CD8-positive, alpha-beta T cell (primary cell): ENCODE measurements at regions of chr12 and their contacts with region 1.

Region 1: GRCh38 chr12:109110988-109111495 is 5.3 kb upstream of the ACACB start:
- DNase-seq: peak; percentile 11 to 74 (median 55)
- ATAC-seq: peak; percentile 75
- H3K4me3 ChIP-seq: peak overlapping the region; percentile 57 to 71
- H3K4me3 Mint-ChIP-seq: peak overlapping the region; percentile 83
- H3K27ac ChIP-seq: peak overlapping the region; percentile 64 to 73
- H3K27ac Mint-ChIP-seq: peak overlapping the region; percentile 85
- H3K4me1 ChIP-seq: peaks cover 7% of the 10 kb centered on the region
- H3K4me1 Mint-ChIP-seq: peaks cover 36% of the 10 kb centered on the region
- H3K27me3 ChIP-seq: no peaks in the 10 kb centered on the region
- H3K27me3 Mint-ChIP-seq: no peaks in the 10 kb centered on the region
- CTCF ChIP-seq: no peak

Region 2: DNA sequence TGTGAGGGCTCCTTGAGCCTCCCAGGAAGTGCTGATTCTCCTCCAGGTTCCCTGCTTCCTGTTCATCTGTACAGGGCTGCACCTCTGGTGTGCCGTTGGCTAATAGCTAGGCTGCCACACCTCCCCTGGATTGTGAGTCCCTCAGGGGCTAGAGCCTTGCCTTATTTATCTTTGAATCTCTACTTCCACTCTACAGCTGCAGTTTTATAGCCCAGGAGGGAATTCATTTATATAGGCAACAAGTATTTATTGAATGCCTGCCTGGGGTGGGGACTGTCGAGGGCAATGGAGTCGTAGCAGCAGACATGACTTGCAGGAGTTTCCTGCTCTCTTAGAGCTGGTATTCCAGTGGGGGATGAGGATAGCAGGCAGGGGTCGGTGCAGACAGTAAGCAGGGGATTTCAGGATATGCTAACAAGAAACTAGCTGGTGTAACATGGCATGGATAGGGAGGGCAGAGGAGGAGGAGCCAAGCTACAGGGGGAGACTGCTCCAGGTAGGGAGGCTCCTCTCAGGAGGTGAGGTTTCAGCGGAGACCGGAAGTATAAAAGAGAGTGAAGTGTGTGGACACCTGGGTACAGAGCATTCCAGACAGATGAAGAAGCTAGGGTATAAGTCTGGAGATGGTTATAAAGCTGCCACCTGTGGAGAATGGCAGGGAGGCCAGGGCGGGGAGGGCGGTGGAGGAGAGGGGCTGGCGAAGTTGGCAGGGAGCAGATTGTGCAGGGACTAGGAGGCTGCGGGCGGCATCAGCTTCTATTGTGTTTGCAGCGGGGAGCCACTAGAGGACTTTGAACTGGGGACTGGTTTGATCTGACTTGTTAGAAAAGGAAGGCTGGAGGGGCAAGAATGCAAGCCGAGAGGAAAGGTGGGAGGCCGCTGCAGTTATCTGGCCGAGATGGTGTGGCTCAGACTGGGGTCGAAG is 41.5 kb before region 1 on chr12:
- CTCF ChIA-PET with region 1: no interaction called
- POLR2A ChIA-PET with region 1: no interaction called
- intact Hi-C with region 1: no loop called
- DNase-seq: no peak
- ATAC-seq: no peak
- H3K4me3 ChIP-seq: no peak overlapping the region
- H3K4me3 Mint-ChIP-seq: no peak overlapping the region
- H3K27ac ChIP-seq: no peak overlapping the region
- H3K27ac Mint-ChIP-seq: no peak overlapping the region
- H3K4me1 ChIP-seq: no peaks in the 10 kb centered on the region
- H3K4me1 Mint-ChIP-seq: no peaks in the 10 kb centered on the region
- H3K27me3 ChIP-seq: no peaks in the 10 kb centered on the region
- H3K27me3 Mint-ChIP-seq: no peaks in the 10 kb centered on the region
- CTCF ChIP-seq: no peak

Region 3: GRCh38 chr12:109098183-109099050 is 12.6 kb before region 1 on chr12:
- CTCF ChIA-PET with region 1: interaction called, 33 read pairs
- POLR2A ChIA-PET with region 1: no interaction called
- intact Hi-C with region 1: loop called in 1 of 2 experiments (anchors 1 kb)
- DNase-seq: peak in 3 of 9 experiments; percentile 26 to 36 (median 29)
- ATAC-seq: peak; percentile 22
- H3K4me3 ChIP-seq: peak overlapping the region; percentile 65 to 90
- H3K4me3 Mint-ChIP-seq: peak overlapping the region; percentile 88
- H3K27ac ChIP-seq: peak overlapping the region; percentile 55 to 70
- H3K27ac Mint-ChIP-seq: peak overlapping the region; percentile 65
- H3K4me1 ChIP-seq: peaks cover 32% of the 10 kb centered on the region
- H3K4me1 Mint-ChIP-seq: peaks cover 35% of the 10 kb centered on the region
- H3K27me3 ChIP-seq: no peaks in the 10 kb centered on the region
- H3K27me3 Mint-ChIP-seq: no peaks in the 10 kb centered on the region
- CTCF ChIP-seq: no peak

Region 4: DNA sequence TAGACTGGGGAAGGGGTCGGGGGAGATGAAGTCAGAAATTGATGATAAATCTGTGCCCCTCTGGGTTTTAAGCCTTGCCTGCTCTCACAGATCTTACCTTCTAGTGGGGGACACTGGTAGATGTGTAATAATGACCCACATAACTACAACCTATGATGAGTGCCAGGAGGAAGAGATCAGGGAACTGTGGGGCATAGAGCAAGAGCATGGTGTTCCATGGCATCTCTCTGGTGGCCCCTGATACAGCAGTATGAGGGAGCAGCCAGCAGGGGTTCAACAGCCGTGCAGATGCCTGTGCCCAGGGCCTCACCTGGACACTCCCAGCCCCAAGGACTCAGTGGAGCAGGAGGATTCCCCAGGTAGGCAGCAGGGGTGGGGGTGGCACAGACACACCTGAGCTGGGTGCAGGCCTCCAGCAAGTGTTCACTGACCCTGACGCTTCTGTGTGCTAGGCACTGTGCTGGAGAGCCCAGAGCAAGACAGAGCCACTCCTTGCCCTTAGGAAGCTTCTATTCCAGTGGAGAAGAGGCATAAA is 10.4 kb after region 1 on chr12:
- CTCF ChIA-PET with region 1: interaction called, 10 read pairs
- POLR2A ChIA-PET with region 1: no interaction called
- intact Hi-C with region 1: no loop called
- DNase-seq: no peak
- ATAC-seq: no peak
- H3K4me3 ChIP-seq: no peak overlapping the region
- H3K4me3 Mint-ChIP-seq: no peak overlapping the region
- H3K27ac ChIP-seq: no peak overlapping the region
- H3K27ac Mint-ChIP-seq: no peak overlapping the region
- H3K4me1 ChIP-seq: no peaks in the 10 kb centered on the region
- H3K4me1 Mint-ChIP-seq: peaks cover 3% of the 10 kb centered on the region
- H3K27me3 ChIP-seq: no peaks in the 10 kb centered on the region
- H3K27me3 Mint-ChIP-seq: no peaks in the 10 kb centered on the region
- CTCF ChIP-seq: no peak

Region 5: DNA sequence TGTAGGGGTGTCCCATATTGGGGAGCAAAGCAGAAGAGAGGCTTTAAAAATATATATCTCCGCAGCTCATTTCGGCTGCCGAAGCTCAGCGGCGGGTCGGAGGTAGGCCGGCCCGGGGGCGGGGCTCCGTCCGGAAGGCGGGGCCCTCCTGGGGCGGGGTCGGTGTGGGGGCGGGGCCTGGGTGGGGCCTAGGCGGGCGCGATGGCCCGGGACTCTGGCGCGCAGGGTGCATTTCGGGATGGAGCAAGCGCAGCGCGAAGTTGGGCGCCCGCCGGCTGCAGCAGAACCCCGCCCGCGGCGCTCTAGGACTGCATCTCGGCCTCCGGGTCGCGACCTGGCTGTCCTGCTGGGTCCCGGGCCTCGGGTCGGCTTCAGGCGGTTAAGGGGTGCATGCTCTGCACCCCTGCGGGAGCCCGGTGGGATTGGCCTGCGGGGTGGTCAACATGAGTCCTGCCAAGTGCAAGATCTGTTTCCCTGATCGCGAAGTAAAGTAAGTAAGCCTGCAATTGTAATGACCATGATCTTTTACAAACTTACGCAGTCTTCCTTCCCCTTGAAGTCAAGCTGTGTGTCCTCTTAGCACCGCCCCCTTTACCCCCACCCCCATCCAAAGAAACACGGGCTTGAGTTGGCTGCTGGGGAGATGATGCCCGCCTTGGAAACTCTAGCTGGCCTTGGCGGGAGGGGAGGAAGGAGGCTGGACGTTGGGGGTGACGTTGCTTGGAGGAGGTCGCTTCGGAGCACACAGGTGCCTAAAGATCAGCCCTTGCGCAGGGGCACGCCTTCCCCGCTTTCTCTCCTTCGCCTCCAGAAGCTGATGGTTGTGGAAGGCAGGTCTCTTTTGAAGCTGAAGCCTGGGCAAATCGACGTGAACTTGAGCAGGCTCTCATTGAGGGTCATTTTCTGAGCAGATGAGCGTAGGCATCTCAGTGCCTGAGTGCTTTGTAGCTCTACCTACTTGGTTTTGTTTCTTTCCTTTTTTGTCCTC is 43.7 kb after region 1 on chr12:
- CTCF ChIA-PET with region 1: interaction called, 6 read pairs
- POLR2A ChIA-PET with region 1: interaction called, 3 read pairs
- intact Hi-C with region 1: loop called (anchors 2 to 5 kb)
- DNase-seq: peak; percentile 60 to 89 (median 78)
- ATAC-seq: peak; percentile 98
- H3K4me3 ChIP-seq: peak overlapping the region; percentile 60 to 80
- H3K4me3 Mint-ChIP-seq: peak overlapping the region; percentile 95
- H3K27ac ChIP-seq: peak overlapping the region; percentile 22 to 46
- H3K27ac Mint-ChIP-seq: peak overlapping the region; percentile 89
- H3K4me1 ChIP-seq: peaks cover 20% of the 10 kb centered on the region
- H3K4me1 Mint-ChIP-seq: peaks cover 17% of the 10 kb centered on the region
- H3K27me3 ChIP-seq: no peaks in the 10 kb centered on the region
- H3K27me3 Mint-ChIP-seq: peaks cover 3% of the 10 kb centered on the region
- CTCF ChIP-seq: no peak

Region 6: DNA sequence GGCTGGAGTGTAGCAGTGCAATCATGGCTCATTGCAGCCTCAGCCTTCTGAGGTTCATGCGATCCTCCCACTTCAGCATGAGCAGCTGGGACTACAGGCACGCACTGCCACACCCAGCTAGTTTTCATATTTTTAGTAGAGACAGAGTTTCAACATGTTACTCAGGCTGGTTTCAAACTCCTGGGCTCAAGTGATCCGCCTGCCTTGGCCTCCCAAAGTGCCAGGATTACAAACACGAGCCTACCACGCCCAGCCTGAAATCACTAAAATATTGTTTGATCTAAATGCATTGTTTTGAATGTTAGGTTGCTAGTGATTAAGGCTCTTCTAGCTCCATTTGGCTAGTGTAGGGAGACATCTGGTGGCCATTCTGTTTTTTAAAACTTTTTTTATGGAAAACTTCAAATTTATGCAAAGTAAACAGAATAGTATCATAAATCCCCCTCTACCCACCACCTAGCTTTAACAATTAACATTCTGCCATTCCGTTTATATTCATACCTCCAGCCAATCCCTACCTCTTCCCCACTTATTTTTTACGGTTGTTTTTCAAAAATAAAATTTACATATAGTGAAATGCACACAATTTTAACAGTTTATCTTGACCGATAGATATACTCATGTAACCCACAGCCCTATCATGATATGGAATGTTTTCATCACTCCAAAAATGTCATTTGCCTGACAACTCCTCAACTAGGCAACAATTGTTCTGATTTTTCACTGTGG is 274.5 kb after region 1 on chr12:
- CTCF ChIA-PET with region 1: interaction called, 5 read pairs
- POLR2A ChIA-PET with region 1: no interaction called
- intact Hi-C with region 1: loop called in 1 of 2 experiments (anchors 2 kb)
- DNase-seq: peak in 2 of 9 experiments; percentile 31
- ATAC-seq: no peak
- H3K4me3 ChIP-seq: no peak overlapping the region
- H3K4me3 Mint-ChIP-seq: no peak overlapping the region
- H3K27ac ChIP-seq: no peak overlapping the region
- H3K27ac Mint-ChIP-seq: no peak overlapping the region
- H3K4me1 ChIP-seq: no peaks in the 10 kb centered on the region
- H3K4me1 Mint-ChIP-seq: no peaks in the 10 kb centered on the region
- H3K27me3 ChIP-seq: peaks cover 0 to 4% of the 10 kb centered on the region in 2 experiments
- H3K27me3 Mint-ChIP-seq: peaks cover 24% of the 10 kb centered on the region
- CTCF ChIP-seq: no peak

Region 7: DNA sequence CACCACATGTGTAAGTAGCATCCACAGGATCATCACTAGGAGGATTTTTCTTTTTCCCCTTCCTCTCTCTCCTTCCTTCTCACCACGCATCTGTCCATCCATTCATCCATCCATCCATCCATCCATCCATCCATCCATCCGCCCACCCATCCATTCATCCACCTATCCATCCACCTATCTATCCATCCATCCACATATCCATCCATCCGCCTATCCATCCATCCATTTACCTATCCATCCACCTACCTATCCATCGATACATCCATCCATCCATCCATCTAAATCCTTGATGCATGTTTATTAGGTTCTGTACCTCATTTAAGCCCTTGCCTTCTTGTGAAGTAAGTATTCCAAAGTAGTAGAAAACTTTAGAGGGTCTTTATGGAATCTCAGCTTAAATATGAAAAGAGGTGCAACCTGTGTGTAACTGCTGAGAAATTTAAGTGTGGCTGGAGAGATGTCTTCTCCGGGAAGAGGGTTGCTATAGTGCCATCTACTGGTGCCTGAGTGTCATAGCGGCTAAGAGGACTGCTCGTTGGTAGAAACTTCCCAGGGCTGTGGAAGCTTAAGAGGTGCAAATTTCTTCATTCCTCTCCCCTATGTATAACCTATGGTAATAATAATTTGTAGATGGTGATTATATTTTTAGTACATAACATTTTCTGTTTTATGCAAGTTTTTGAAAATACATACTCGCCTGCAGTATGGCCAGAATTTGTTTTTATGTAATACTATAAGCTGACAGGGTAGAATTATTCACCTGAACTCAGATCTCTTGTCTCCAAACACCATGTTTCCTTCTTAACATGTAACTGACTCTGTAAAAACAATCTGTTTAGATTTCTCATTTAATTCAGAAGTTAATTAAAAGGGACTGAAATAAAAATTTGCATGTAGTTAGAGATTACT is 282.6 kb after region 1 on chr12:
- CTCF ChIA-PET with region 1: interaction called, 14 read pairs
- POLR2A ChIA-PET with region 1: interaction called, 5 read pairs
- intact Hi-C with region 1: loop called in 1 of 2 experiments (anchors 1 kb)
- DNase-seq: peak in 6 of 9 experiments; percentile 7 to 68 (median 36)
- ATAC-seq: peak; percentile 66
- H3K4me3 ChIP-seq: no peak overlapping the region
- H3K4me3 Mint-ChIP-seq: no peak overlapping the region
- H3K27ac ChIP-seq: no peak overlapping the region
- H3K27ac Mint-ChIP-seq: no peak overlapping the region
- H3K4me1 ChIP-seq: no peaks in the 10 kb centered on the region
- H3K4me1 Mint-ChIP-seq: no peaks in the 10 kb centered on the region
- H3K27me3 ChIP-seq: peaks cover 0 to 2% of the 10 kb centered on the region in 2 experiments
- H3K27me3 Mint-ChIP-seq: peaks cover 32% of the 10 kb centered on the region
- CTCF ChIP-seq: peak; percentile 74

Region 8: DNA sequence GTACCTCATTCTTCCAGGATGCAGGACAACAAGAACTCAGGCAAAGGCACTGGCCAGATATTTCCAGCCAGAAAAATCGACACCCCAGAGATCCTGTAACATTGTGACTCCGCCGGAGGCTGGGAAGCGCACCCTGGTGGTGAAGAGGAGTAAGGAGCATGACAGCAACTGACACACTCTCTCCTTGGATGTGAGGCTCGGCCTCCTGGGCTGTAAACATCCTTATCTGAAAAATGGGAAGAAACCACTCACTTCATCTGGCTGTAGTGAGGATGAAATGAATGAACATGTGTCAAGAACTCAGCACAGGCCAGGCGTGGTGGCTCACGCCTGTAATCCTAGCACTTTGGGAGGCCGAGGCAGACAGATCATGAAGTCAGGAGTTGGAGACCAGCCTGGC is 816.6 kb after region 1 on chr12:
- CTCF ChIA-PET with region 1: no interaction called
- POLR2A ChIA-PET with region 1: no interaction called
- intact Hi-C with region 1: no loop called
- DNase-seq: peak in 7 of 9 experiments; percentile 7 to 62 (median 34)
- ATAC-seq: peak; percentile 64
- H3K4me3 ChIP-seq: no peak overlapping the region
- H3K4me3 Mint-ChIP-seq: no peak overlapping the region
- H3K27ac ChIP-seq: no peak overlapping the region
- H3K27ac Mint-ChIP-seq: peak overlapping the region; percentile 75
- H3K4me1 ChIP-seq: no peaks in the 10 kb centered on the region
- H3K4me1 Mint-ChIP-seq: peaks cover 2% of the 10 kb centered on the region
- H3K27me3 ChIP-seq: no peaks in the 10 kb centered on the region
- H3K27me3 Mint-ChIP-seq: no peaks in the 10 kb centered on the region
- CTCF ChIP-seq: peak; percentile 25